ENCODE measurements at regions of chr15 and their contacts with region 1.

Region 1: DNA sequence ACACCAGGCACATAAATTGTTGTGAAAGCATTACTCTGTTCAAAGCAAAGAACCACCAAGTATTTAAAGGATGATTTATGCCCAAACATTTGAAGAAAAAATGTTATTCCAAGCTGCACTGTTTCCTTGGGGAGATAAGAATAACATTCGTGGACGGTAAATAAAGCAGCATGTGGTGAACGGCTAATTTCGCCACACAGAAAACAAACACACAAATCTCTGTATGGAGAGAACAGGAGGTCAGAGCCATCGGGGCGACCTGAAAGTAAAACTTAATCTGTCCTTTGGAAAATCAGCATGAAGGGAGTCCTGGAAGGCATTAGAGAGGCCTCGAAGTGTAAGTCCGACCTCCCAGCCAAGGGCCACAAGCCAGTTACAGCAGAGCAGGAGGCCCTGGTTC is 27.1 kb upstream of the GABRG3 start:
- DNase-seq: no peak
- H3K4me3 ChIP-seq: no peak overlapping the region
- H3K27ac ChIP-seq: no peak overlapping the region
- H3K4me1 ChIP-seq: no peaks in the 10 kb centered on the region
- H3K27me3 ChIP-seq: no peaks in the 10 kb centered on the region
- CTCF ChIP-seq: no peak
- EP300 ChIP-seq: no peak
- POLR2A ChIP-seq: no peak

Region 2: GRCh38 chr15:26889298-26889898 is 54.5 kb before region 1 on chr15:
- intact Hi-C with region 1: loop called in 1 of 4 experiments (anchors 10 kb)
- DNase-seq: peak in 1 of 5 donors; percentile 33
- H3K4me3 ChIP-seq: no peak overlapping the region
- H3K27ac ChIP-seq: no peak overlapping the region
- H3K4me1 ChIP-seq: no peaks in the 10 kb centered on the region
- H3K27me3 ChIP-seq: no peaks in the 10 kb centered on the region
- CTCF ChIP-seq: no peak
- EP300 ChIP-seq: no peak
- POLR2A ChIP-seq: no peak